Transverse colon (tissue), 4 donors: ENCODE measurements at regions of chr15 and their contacts with region 1.

Region 1: GRCh38 chr15:97909291-97909891 is 51.1 kb upstream of the ARRDC4 start:
- DNase-seq: peak; percentile 77
- H3K4me3 ChIP-seq: no peak overlapping the region
- H3K27ac ChIP-seq: no peak overlapping the region
- H3K4me1 ChIP-seq: peaks cover 0 to 2% (median 1%) of the 10 kb centered on the region in 4 donors
- H3K27me3 ChIP-seq: peaks cover 3% of the 10 kb centered on the region
- CTCF ChIP-seq: peak; percentile 85 to 93 (median 86)
- EP300 ChIP-seq: no peak
- POLR2A ChIP-seq: no peak

Region 2: DNA sequence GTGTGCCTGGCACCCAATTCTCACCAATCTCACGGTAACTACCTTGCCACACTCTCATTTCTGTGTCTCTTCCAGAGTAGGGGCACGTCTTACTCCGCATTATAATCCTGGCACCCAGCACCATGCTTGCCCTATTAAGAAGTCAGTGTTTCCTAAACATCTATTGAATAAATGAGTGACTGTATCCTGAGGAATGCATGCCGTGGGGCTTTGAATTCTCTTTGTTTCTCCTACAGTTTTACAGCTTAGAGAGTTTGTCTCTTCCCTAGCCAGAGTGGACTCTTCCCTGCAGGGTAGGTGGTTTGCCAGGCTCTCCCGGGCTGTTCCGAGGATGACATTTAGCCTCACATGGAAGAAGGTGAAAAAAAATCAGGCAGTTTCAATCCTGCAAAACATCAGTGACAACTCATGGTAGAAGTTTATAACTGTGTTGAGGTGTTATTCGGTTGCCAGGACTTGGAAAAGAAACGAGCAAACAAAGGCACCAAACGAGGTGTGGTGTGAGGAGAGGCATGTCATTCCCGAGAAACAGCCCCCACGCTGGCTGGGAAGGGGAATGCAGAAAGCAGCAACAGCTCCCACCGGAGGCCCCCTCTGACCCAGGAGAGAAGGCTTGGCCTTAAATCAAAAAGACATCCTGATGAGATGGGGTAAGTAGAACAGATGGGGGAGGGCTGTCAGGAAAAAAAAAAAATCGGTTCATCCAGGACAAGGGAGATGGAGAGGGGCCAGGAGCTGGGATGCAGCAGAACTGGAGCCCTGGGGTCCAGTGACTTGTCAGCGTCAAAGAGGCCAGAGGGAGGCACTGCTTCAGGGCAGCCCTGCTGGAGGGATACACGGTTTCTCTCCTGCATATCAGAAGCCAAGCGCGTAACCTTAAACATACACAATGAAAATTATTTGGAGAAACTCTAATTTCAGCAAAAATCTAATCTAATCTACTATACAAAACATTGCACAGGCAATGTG is 117.3 kb before region 1 on chr15:
- in situ Hi-C with region 1: no loop called
- intact Hi-C with region 1: no loop called
- DNase-seq: peak; percentile 8
- H3K4me3 ChIP-seq: no peak overlapping the region
- H3K27ac ChIP-seq: peak overlapping the region; percentile 25 to 72 (median 66)
- H3K4me1 ChIP-seq: no peaks in the 10 kb centered on the region
- H3K27me3 ChIP-seq: no peaks in the 10 kb centered on the region
- CTCF ChIP-seq: no peak
- EP300 ChIP-seq: no peak
- POLR2A ChIP-seq: no peak

Region 3: DNA sequence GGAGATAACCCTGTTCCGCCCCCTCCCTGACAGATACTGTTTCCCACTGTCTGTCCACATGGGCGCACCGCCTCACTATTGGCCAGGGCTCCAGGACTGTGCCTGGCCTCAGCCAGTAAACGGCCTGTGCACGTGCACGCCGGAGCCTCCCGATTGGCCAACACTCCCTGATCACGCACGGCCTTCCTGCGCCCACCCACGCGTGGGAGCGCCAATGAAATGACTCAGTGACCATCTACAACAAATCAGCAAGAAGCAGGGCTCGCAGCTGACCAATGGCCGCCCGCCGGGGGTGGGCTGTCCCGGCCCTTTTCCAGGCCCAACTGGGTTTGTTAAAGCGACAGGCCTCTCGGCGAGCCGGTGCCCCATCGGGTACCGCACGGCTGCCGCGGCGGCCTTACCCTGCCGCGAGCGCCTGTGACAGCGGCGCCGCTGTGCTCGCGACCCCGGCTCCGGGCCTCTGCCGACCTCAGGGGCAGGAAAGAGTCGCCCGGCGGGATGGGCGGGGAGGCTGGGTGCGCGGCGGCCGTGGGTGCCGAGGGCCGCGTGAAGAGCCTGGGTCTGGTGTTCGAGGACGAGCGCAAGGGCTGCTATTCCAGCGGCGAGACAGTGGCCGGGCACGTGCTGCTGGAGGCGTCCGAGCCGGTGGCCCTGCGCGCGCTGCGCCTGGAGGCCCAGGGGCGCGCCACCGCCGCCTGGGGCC is 51.1 kb after region 1 on chr15 and contains the start of gene ARRDC4:
- in situ Hi-C with region 1: no loop called
- intact Hi-C with region 1: loop called (anchors 10 kb)
- DNase-seq: peak; percentile 100
- H3K4me3 ChIP-seq: peak within 1 kb of the TSS; percentile 90 to 99 (median 96)
- H3K27ac ChIP-seq: peak within 1 kb of the TSS; percentile 96 to 99 (median 98)
- H3K4me1 ChIP-seq: peaks cover 15 to 45% (median 36%) of the 10 kb centered on the region in 4 donors
- H3K27me3 ChIP-seq: no peaks in the 10 kb centered on the region
- CTCF ChIP-seq: no peak
- EP300 ChIP-seq: no peak
- POLR2A ChIP-seq: peak; percentile 81
- total RNA-seq, gene ARRDC4: 35.9 to 188 (median 70.7) TPM

Region 4: DNA sequence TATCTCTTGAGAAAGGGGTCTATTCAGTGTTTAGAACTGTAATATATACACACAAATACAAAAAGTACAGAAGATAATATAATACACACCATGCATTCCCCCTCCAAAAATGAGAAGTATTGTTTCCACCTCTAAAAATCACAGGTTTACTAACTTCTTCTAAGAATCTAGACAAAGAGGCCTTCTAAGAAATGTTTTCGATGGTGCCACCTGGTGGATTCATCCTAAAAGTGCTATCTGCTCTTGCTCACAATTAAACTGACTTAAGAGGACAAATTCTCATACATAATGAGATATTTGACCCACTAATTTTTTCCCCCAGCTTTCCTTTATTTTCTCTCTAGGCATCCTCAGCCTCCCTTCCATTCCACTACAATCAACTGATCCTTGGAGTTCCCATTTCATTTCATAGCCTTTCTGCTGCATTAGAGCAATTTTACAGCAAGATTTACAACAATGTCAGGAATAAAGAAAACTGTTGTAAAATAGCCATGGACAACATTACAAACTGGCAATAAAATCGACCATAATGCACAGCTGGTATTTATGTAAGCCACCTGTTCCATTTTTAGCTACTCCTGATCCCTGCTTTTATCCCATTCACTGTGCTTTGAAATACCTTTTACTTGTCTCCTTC is 175.7 kb after region 1 on chr15:
- in situ Hi-C with region 1: loop called (anchors 5 to 10 kb)
- intact Hi-C with region 1: loop called (anchors 5 kb)
- DNase-seq: peak; percentile 48
- H3K4me3 ChIP-seq: no peak overlapping the region
- H3K27ac ChIP-seq: no peak overlapping the region
- H3K4me1 ChIP-seq: peaks cover 0 to 5% (median 1%) of the 10 kb centered on the region in 4 donors
- H3K27me3 ChIP-seq: no peaks in the 10 kb centered on the region
- CTCF ChIP-seq: peak; percentile 62 to 80 (median 71)
- EP300 ChIP-seq: no peak
- POLR2A ChIP-seq: no peak

Region 5: GRCh38 chr15:98177924-98178592 is 268.7 kb after region 1 on chr15:
- in situ Hi-C with region 1: loop called in 3 of 4 experiments (anchors 10 to 25 kb)
- intact Hi-C with region 1: loop called (anchors 5 kb)
- DNase-seq: peak; percentile 29
- H3K4me3 ChIP-seq: no peak overlapping the region
- H3K27ac ChIP-seq: no peak overlapping the region
- H3K4me1 ChIP-seq: peaks cover 0 to 5% (median 2%) of the 10 kb centered on the region in 4 donors
- H3K27me3 ChIP-seq: peaks cover 44% of the 10 kb centered on the region
- CTCF ChIP-seq: peak; percentile 63 to 79 (median 67)
- EP300 ChIP-seq: no peak
- POLR2A ChIP-seq: no peak

Region 6: DNA sequence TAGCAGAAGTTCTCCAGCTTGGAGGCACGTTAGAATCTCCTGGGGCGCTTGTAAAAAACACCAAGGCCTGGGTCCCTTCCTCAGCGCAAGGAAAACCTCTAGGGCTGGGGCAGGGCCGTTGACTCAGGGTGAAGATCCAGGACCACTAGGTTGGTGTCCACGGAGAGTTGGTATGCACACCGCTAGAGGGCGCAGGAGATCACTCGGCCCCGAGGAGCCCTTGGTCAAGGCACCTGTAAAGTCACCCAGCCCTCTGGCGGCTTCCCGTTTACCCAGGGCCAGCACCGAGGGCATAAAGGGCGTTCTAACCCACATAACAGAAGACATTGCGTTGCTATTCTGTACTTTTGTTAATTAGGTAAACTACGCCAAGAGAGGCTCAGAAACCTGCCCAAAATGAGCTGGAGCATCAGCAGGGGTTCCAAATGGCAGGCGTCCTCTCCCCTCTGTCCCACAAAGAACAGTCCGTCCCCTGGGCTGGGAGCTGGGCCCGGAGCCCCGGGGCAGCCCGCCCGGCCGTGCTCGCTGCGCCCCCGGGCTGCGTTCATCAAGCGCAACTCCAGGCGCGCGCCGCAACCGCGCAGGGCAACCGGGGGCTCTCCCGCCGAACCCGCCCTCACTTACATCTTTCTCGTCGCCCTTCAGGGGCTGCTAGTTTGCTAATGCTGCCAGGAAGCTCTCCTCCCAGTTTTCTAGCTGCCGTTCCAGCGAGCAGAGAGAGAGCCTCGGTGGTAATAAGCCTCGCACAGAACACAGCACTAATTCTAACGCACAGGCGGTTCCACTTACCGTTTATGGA is 383.2 kb after region 1 on chr15:
- in situ Hi-C with region 1: loop called in 2 of 4 experiments (anchors 25 kb)
- intact Hi-C with region 1: loop called (anchors 10 kb)
- DNase-seq: peak; percentile 39
- H3K4me3 ChIP-seq: no peak overlapping the region
- H3K27ac ChIP-seq: no peak overlapping the region
- H3K4me1 ChIP-seq: peaks cover 0 to 9% (median 7%) of the 10 kb centered on the region in 4 donors
- H3K27me3 ChIP-seq: peaks cover 52% of the 10 kb centered on the region
- CTCF ChIP-seq: peak; percentile 39 to 63 (median 56)
- EP300 ChIP-seq: no peak
- POLR2A ChIP-seq: no peak

Region 7: GRCh38 chr15:98421419-98422129 is 512.2 kb after region 1 on chr15:
- in situ Hi-C with region 1: loop called in 1 of 4 experiments (anchors 25 kb)
- intact Hi-C with region 1: no loop called
- DNase-seq: peak; percentile 58
- H3K4me3 ChIP-seq: peak overlapping the region in 1 of 4 donors; percentile 15
- H3K27ac ChIP-seq: no peak overlapping the region
- H3K4me1 ChIP-seq: peaks cover 6 to 12% (median 10%) of the 10 kb centered on the region in 4 donors
- H3K27me3 ChIP-seq: peaks cover 25% of the 10 kb centered on the region
- CTCF ChIP-seq: peak; percentile 90 to 100 (median 99)
- EP300 ChIP-seq: no peak
- POLR2A ChIP-seq: no peak